ENCODE measurements at regions of chr3 and their contacts with region 1.

Region 1: GRCh38 chr3:66372681-66373350 is 128.0 kb downstream of the LRIG1 start:
- DNase-seq: peak in 29 of 42 donors; percentile 35 to 83 (median 58)

Region 2: GRCh38 chr3:65979162-65979561 is 393.7 kb before region 1 on chr3:
- intact Hi-C with region 1: no loop called
- DNase-seq: peak in 7 of 42 donors; percentile 6 to 44 (median 16)

Region 3: DNA sequence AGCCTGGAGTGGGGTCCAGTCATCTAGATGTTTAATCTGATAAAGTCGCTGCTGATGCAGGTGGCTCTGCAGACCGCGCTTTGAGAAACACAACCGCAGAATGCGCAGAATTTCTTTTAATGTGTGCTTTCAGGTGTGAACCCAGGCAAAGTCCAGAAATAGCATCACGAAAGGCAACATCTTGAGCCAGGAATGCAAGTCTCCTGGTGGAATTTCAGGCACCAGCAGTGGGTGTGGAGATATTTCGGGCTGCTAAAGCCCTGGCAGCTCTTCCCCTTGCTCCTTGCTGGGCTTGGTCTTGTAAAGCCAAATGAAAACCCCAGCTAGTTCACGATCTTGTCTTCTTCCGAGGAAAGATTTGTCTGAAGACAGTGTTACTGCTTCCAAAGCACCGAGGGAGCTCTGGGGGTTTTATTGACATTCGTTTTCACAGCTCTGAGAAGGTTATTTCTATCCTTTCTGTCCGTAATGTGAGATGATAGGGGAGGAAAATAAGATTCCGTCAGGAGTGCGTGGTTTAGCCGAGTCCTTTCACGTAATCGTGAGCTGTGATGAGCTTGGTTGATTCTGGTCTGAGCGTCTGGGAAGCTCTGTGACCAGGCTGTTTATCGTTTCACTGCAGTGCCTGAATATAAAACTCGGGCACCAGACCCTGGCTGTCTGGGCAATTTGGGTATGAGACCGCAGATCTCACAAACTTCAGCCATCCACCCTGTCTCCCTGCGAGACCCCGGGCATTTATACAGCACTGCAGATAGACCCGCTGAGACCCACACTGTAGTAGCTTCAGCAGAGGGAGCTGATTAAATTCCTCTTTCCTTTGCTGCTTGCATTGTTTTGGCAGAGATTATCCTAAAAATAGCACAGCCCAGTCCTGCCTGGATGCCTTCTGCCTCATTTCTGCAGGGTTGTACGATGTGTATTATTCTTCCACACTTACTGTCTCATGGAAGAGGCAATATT is 219.1 kb before region 1 on chr3:
- intact Hi-C with region 1: no loop called
- DNase-seq: peak in 16 of 42 donors; percentile 1 to 44 (median 10)

Region 4: GRCh38 chr3:66276705-66277274 is 96.0 kb before region 1 on chr3:
- intact Hi-C with region 1: loop called (anchors 5 kb)
- DNase-seq: peak in 38 of 42 donors; percentile 10 to 91 (median 72)

Region 5: DNA sequence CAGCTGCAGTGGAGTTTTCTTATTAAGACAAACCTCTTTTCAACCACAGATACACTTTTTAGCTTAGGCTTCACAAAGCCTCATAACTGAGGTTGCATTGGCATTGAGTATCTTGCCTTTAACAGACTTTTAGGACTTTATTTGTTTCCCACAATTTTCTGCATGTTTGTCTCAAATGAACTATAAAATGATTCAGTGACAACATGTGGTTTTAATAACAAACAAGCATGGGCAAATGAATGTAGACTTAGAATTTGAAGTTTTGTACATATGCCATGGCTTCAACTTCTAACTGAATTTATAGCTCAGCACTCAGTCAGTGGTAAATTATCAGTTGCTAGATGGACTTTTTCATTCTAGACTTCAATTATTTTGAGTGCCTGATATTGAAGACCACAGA is 50.4 kb before region 1 on chr3:
- intact Hi-C with region 1: no loop called
- DNase-seq: no peak